ENCODE measurements at regions of chr16 and their contacts with region 1.

Region 1: DNA sequence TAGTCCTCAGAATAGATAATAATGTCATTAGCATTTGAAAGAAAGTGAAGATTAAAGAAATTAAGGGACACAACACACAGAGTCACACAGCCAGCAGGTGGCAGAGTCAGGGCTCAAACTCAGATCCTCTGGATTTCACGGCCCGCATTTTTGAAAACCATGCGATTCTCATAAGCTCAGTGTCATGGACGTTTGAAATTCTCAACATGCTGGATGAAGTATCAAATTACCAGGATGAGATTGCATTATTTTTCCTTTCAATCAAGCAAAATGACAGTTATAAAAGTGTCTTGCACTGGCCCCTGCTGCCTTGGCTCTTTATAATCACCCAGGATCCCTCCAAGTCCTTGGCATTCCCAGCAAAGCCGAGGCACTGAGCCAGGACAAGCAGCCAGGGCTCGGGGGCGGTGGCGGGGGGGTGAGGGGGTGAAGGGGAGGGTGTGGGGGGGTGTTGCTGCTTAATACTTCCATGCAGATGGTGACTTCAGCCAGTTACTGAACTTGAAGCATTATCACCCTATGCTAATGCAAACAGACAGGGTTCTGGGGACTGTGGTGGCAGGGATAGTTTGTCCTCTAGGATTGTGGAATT is 6.6 kb upstream of the BMERB1 start:
- DNase-seq: peak; percentile 77
- H3K4me3 Mint-ChIP-seq: no peak overlapping the region
- H3K27ac Mint-ChIP-seq: no peak overlapping the region
- H3K4me1 Mint-ChIP-seq: peaks cover 3% of the 10 kb centered on the region
- H3K27me3 Mint-ChIP-seq: no peaks in the 10 kb centered on the region

Region 2: GRCh38 chr16:15548482-15548891 is 120.7 kb after region 1 on chr16:
- CTCF ChIA-PET with region 1: interaction called, 6 read pairs
- intact Hi-C with region 1: loop called (anchors 1 kb)
- DNase-seq: no peak
- H3K4me3 Mint-ChIP-seq: no peak overlapping the region
- H3K27ac Mint-ChIP-seq: no peak overlapping the region
- H3K4me1 Mint-ChIP-seq: peaks cover 24% of the 10 kb centered on the region
- H3K27me3 Mint-ChIP-seq: no peaks in the 10 kb centered on the region

Region 3: DNA sequence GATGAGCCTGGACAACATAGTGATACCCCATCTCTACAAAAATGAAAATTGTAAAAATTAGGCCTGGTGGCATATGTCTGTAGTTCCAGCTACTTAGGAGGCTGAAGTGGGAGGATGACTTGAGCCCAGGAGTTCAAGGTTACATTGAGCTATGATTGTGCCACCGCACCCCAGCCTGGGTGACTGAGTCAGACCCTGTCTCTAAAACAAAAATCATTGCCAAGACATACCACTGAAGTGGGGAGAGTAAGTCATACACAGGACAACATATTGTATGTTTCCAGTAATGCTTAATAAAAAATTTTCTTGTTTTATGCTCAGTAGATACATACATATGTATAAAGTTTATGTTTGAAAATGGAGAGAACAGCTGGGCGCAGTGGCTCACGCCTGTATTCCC is 261.5 kb after region 1 on chr16:
- CTCF ChIA-PET with region 1: no interaction called
- intact Hi-C with region 1: no loop called
- DNase-seq: no peak
- H3K4me3 Mint-ChIP-seq: no peak overlapping the region
- H3K27ac Mint-ChIP-seq: no peak overlapping the region
- H3K4me1 Mint-ChIP-seq: no peaks in the 10 kb centered on the region
- H3K27me3 Mint-ChIP-seq: no peaks in the 10 kb centered on the region

Region 4: GRCh38 chr16:15704545-15704987 is 276.8 kb after region 1 on chr16:
- CTCF ChIA-PET with region 1: interaction called, 3 read pairs
- intact Hi-C with region 1: loop called (anchors 1 kb)
- DNase-seq: peak; percentile 88
- H3K4me3 Mint-ChIP-seq: no peak overlapping the region
- H3K27ac Mint-ChIP-seq: peak overlapping the region; percentile 46
- H3K4me1 Mint-ChIP-seq: peaks cover 13% of the 10 kb centered on the region
- H3K27me3 Mint-ChIP-seq: no peaks in the 10 kb centered on the region

Region 5: GRCh38 chr16:16191493-16192167 is 763.9 kb after region 1 on chr16:
- CTCF ChIA-PET with region 1: no interaction called
- intact Hi-C with region 1: loop called (anchors 10 kb)
- DNase-seq: no peak
- H3K4me3 Mint-ChIP-seq: no peak overlapping the region
- H3K27ac Mint-ChIP-seq: no peak overlapping the region
- H3K4me1 Mint-ChIP-seq: no peaks in the 10 kb centered on the region
- H3K27me3 Mint-ChIP-seq: peaks cover 2% of the 10 kb centered on the region